ENCODE measurements at regions of chr11 and their contacts with region 1.

Region 1: GRCh38 chr11:40306938-40307548 is 1152.4 kb downstream of the LRRC4C start:
- DNase-seq: peak; percentile 32
- H3K4me3 ChIP-seq: no peak overlapping the region
- H3K27ac ChIP-seq: no peak overlapping the region
- H3K4me1 ChIP-seq: no peaks in the 10 kb centered on the region
- H3K27me3 ChIP-seq: no peaks in the 10 kb centered on the region
- CTCF ChIP-seq: peak; percentile 69 to 84

Region 2: DNA sequence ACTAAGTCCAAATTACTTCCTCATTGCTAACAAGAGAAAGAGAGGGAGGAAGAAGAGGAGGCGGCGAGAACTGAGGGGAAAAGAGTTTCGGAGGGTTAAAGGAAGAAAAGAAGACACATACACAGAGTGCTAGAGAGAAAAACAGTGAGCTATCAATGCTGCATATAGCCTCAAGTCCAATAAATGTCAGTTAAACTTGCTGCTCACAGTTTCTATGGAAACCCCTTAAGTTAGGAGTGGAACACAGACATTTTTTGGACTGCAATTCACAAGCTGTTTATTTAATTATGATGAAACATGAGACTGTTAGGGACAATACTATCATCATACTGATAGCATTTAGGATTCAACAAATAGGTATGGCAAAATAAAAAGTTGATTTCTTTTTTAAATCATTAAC is 168.0 kb before region 1 on chr11:
- CTCF ChIA-PET with region 1: no interaction called
- dilution Hi-C with region 1: no loop called
- in situ Hi-C with region 1: no loop called
- intact Hi-C with region 1: no loop called
- DNase-seq: no peak
- H3K4me3 ChIP-seq: no peak overlapping the region
- H3K27ac ChIP-seq: no peak overlapping the region
- H3K4me1 ChIP-seq: no peaks in the 10 kb centered on the region
- H3K27me3 ChIP-seq: no peaks in the 10 kb centered on the region
- CTCF ChIP-seq: no peak

Region 3: DNA sequence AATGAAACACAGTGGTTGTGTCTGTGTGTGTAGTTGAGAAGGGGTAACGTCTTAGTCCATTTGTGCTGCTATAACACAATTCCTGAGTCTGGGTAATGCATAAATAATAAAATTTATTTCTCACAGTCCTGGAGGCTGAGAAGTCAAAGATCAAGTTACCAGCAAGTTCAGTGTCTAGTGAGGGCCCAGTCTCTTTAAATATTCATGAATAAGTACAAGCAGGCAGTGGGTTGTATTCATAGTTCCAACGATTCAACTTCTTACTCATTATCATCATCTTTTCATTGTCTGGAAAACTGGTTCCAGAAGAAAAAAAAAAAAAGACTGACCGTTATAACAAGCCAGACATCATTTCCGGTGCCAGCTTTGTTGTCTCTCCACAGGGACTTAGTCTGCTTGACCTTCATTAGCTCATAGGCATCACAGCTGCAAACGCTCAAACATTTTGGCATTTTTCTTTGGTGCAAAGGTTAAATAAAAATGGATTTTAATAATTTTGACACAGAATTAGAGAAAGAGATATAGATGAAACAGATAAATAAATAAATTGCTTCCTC is 145.1 kb before region 1 on chr11:
- CTCF ChIA-PET with region 1: no interaction called
- dilution Hi-C with region 1: no loop called
- in situ Hi-C with region 1: no loop called
- intact Hi-C with region 1: no loop called
- DNase-seq: no peak
- H3K4me3 ChIP-seq: no peak overlapping the region
- H3K27ac ChIP-seq: no peak overlapping the region
- H3K4me1 ChIP-seq: no peaks in the 10 kb centered on the region
- H3K27me3 ChIP-seq: no peaks in the 10 kb centered on the region
- CTCF ChIP-seq: no peak

Region 4: DNA sequence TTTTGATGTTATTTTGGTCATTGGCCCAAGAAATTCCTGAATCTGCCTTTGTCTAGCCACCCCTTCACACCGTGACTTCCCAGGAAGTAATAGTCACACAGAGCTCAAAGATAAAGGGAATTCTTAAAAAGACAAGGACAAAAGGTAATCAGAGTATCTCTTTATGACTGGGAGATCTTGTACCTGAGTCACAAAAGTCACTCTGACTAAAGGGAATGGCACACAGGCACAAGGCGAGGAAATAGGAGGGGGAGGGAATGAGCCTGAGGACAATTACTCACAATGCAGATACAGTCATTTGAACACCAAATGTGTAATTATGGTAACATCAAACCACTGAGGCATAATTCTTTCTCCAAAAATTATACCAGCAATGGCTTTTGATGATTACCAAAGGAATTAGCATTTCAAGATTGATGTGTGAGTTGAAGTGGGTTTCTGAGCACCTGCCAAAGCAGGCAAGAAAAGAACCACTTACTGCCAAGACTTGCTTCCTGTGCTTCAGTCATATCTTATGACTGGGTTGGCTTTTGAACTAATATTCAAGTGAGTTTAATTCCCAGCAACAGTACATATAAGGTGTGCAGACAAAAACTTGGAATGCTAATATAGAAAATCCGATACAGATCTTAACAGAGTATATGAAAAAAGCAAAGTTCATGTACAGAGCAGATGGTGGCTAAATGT is 296.0 kb after region 1 on chr11:
- CTCF ChIA-PET with region 1: no interaction called
- dilution Hi-C with region 1: no loop called
- in situ Hi-C with region 1: no loop called
- intact Hi-C with region 1: loop called (anchors 10 kb)
- DNase-seq: peak; percentile 55
- H3K4me3 ChIP-seq: no peak overlapping the region
- H3K27ac ChIP-seq: peak overlapping the region; percentile 46
- H3K4me1 ChIP-seq: peaks cover 8% of the 10 kb centered on the region
- H3K27me3 ChIP-seq: peaks cover 2% of the 10 kb centered on the region
- CTCF ChIP-seq: no peak

Region 5: DNA sequence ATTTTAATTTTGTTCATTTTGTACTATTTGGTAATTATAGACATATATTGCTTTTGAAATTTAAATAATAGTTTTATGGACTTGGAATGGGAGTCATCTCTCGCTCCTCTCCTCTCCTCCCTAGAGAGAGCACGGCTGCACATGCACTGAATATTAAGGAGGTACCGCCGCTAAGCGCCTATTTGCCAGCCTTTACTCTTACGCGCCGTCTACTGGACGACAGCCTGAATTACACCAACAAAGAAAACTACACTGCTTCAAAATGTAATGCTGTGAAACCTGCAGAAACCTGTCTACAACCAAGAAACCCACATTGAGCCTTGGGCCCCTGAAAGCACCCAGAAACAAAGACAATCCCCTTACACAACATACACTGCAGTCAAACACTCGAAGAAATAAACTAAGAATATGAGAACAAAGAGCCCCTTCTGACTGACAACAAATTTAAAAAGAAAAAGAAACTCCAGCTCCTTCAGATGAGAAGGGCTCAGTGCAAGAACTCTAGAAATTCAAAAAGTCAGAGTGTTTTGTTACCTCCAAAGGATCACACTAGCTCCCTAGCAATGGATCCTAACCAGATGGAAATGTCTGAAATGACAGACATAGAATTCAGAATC is 415.2 kb after region 1 on chr11:
- CTCF ChIA-PET with region 1: no interaction called
- dilution Hi-C with region 1: no loop called
- in situ Hi-C with region 1: loop called (anchors 10 to 25 kb)
- intact Hi-C with region 1: loop called (anchors 1 kb)
- DNase-seq: peak; percentile 28
- H3K4me3 ChIP-seq: no peak overlapping the region
- H3K27ac ChIP-seq: no peak overlapping the region
- H3K4me1 ChIP-seq: no peaks in the 10 kb centered on the region
- H3K27me3 ChIP-seq: no peaks in the 10 kb centered on the region
- CTCF ChIP-seq: peak; percentile 82 to 83

Region 6: DNA sequence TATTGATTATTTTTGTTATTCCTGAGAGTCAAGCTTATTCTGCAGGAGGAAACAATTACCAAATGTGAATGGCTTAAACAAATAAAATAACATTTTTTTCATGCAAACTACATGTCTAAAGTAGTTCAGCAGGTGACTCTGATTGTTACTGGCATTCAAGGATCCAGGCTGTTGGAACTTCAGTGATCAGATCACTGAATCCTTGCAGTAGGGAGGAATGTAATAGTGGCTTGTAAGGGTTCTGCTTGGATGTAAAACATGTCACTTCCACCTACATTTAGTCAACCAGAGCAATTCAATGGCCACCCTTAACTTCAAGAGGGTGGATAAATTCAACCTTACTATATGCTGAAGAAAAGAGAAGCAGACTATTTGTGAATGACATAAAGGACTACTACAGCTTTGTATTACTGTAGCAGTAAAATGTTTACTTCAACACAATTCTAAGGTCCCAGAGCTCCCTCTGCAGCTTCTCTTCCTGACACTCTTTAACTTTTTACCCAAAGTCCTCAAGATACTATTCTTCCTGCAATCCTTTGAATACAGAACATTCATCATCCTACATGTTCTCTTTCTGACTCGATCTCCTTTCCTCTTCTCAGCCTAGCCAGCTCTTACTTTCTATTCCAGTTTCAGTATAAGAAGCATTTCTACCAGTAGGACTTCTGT is 868.4 kb after region 1 on chr11:
- CTCF ChIA-PET with region 1: no interaction called
- dilution Hi-C with region 1: no loop called
- in situ Hi-C with region 1: loop called (anchors 25 kb)
- intact Hi-C with region 1: no loop called
- DNase-seq: peak; percentile 8
- H3K4me3 ChIP-seq: no peak overlapping the region
- H3K27ac ChIP-seq: no peak overlapping the region
- H3K4me1 ChIP-seq: no peaks in the 10 kb centered on the region
- H3K27me3 ChIP-seq: no peaks in the 10 kb centered on the region
- CTCF ChIP-seq: peak in 1 of 2 donors; percentile 53

Region 7: DNA sequence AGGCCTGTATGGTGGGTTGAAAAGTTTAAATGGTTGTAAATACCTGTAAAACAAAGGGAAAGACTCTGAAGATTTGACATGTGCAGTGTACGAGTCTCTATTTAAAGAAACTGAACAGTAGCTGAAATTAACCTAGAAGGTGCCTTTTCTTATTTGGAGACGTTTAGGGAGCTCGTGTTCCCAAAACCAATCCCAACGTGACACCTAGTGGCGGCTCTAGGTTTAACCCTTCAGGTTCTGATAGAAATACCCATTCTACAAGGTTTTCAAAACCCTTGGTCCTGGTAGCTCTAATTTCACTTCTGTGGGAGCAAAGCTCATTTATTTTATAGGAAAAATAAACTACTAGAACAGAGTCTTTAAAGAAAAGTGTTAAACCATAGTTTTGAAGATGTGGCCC is 894.1 kb after region 1 on chr11:
- CTCF ChIA-PET with region 1: no interaction called
- dilution Hi-C with region 1: no loop called
- in situ Hi-C with region 1: loop called (anchors 25 kb)
- intact Hi-C with region 1: loop called (anchors 1 kb)
- DNase-seq: peak; percentile 29
- H3K4me3 ChIP-seq: no peak overlapping the region
- H3K27ac ChIP-seq: no peak overlapping the region
- H3K4me1 ChIP-seq: no peaks in the 10 kb centered on the region
- H3K27me3 ChIP-seq: no peaks in the 10 kb centered on the region
- CTCF ChIP-seq: peak; percentile 58 to 70